GM12878 (cell line): ENCODE measurements at regions of chr10 and their contacts with region 1.

Region 1: DNA sequence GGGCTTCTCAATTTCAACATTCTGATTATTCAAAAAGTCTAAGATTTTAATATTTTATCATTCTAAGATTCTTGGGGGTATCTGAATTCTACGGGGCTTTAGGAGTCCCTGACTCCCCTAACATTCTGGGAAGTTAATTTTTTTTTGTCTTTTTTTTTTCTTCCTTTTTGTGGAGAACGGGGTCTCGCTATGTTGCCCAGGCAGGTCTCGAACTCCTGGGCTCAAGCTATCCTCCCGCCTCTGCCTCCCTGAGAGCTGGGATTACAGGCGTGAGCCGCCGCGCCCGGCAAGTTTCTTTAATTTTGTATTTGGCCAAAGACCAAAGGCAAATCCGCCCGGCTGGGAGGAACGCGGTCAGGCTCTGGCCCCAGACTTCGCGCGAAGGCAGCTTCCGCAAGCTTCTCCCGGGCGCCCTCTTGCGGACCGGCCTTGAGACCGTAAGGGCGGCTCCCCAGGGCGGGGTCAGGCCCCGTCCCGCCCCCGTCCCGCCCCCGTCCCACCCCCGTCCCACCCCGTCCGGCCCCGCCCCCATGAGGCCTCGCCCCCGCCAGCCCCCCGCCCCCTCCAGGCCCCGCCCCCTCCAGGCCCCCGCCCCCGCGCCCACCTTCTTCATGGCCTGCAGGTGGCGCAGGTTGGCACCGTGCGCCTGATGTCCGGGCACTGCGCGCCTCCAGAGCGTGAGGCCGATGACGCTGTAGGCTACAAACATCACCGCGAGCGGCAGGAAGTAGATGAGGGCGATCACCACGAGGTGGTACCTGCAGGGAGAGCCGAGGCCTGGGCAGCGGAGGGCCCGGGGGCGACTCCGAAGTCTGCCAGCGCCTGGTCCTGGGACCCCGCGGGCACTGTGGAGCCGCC is 8.2 kb downstream of the TACR2 start:
- DNase-seq: peak; percentile 62
- ATAC-seq: peak; percentile 91
- H3K4me3 ChIP-seq: peak overlapping the region; percentile 36; the same call in 1 of the 2 replicates
- H3K27ac ChIP-seq: no peak overlapping the region
- H3K4me1 ChIP-seq: peaks cover 16% of the 10 kb centered on the region
- H3K27me3 ChIP-seq: no peaks in the 10 kb centered on the region
- CTCF ChIP-seq: peak; percentile 27 to 68 (median 58); a peak in 5 of 6 replicates
- EP300 ChIP-seq: no peak
- POLR2A ChIP-seq: peak; percentile 78
- RAD21 ChIP-seq: peak; percentile 27

Region 2: DNA sequence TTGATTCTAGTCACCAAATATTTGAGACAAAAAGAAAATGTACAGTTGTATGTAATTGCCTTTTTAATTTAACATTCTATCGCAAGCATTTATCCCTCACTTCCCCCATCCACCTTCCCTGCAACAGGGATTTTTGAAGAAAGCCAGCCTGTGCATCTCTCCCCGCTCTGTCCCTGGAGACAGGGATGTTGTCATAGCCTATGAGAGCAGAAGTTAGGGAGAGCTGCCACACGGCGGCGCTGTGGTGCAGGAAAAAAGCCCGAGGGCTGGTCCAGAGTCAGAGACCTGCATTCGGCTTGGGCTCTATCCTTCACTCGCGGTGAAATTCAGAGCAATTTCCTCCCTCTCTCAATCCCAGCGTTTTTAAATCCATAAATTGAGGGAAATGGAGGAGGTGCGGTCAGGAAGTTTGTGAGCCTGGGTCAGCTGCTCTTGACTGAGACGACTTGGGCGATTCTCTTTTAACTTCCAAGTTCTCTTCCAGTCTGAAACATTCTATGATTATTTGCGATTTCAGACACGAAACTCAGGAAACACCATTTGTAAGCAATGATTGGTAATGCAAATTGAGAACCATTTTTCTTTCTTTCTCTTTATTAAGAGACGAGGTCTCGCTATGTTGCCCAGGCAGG is 170.9 kb before region 1 on chr10:
- CTCF ChIA-PET with region 1: interaction called, 25 read pairs
- POLR2A ChIA-PET with region 1: no interaction called
- RAD21 ChIA-PET with region 1: interaction called, 8 read pairs
- SMC1A ChIA-PET with region 1: interaction called, 6 read pairs
- in situ Hi-C with region 1: loop called (anchors 5 kb)
- intact Hi-C with region 1: no loop called
- DNase-seq: no peak
- ATAC-seq: peak; percentile 100
- H3K4me3 ChIP-seq: no peak overlapping the region
- H3K27ac ChIP-seq: no peak overlapping the region
- H3K4me1 ChIP-seq: no peaks in the 10 kb centered on the region
- H3K27me3 ChIP-seq: no peaks in the 10 kb centered on the region
- CTCF ChIP-seq: peak; percentile 85 to 98 (median 93)
- EP300 ChIP-seq: no peak
- POLR2A ChIP-seq: no peak
- RAD21 ChIP-seq: peak; percentile 94

Region 3: GRCh38 chr10:69392481-69393000 is 16.0 kb before region 1 on chr10:
- CTCF ChIA-PET with region 1: interaction called, 19 read pairs
- POLR2A ChIA-PET with region 1: no interaction called
- RAD21 ChIA-PET with region 1: interaction called, 4 read pairs
- SMC1A ChIA-PET with region 1: interaction called, 8 read pairs
- in situ Hi-C with region 1: no loop called
- intact Hi-C with region 1: no loop called
- DNase-seq: peak; percentile 51
- ATAC-seq: peak; percentile 100
- H3K4me3 ChIP-seq: no peak overlapping the region
- H3K27ac ChIP-seq: no peak overlapping the region
- H3K4me1 ChIP-seq: no peaks in the 10 kb centered on the region
- H3K27me3 ChIP-seq: no peaks in the 10 kb centered on the region
- CTCF ChIP-seq: peak; percentile 96 to 99 (median 98); a peak in 5 of 6 replicates
- EP300 ChIP-seq: no peak
- POLR2A ChIP-seq: no peak
- RAD21 ChIP-seq: peak; percentile 97

Region 4: GRCh38 chr10:69506834-69507721 is 98.5 kb after region 1 on chr10:
- CTCF ChIA-PET with region 1: interaction called, 32 read pairs
- POLR2A ChIA-PET with region 1: no interaction called
- RAD21 ChIA-PET with region 1: interaction called, 5 read pairs
- SMC1A ChIA-PET with region 1: interaction called, 19 read pairs
- in situ Hi-C with region 1: loop called (anchors 5 kb)
- intact Hi-C with region 1: loop called (anchors 1 kb)
- DNase-seq: no peak
- ATAC-seq: no peak
- H3K4me3 ChIP-seq: no peak overlapping the region
- H3K27ac ChIP-seq: no peak overlapping the region
- H3K4me1 ChIP-seq: no peaks in the 10 kb centered on the region
- H3K27me3 ChIP-seq: no peaks in the 10 kb centered on the region
- CTCF ChIP-seq: no peak
- EP300 ChIP-seq: no peak
- POLR2A ChIP-seq: no peak
- RAD21 ChIP-seq: no peak

Region 5: DNA sequence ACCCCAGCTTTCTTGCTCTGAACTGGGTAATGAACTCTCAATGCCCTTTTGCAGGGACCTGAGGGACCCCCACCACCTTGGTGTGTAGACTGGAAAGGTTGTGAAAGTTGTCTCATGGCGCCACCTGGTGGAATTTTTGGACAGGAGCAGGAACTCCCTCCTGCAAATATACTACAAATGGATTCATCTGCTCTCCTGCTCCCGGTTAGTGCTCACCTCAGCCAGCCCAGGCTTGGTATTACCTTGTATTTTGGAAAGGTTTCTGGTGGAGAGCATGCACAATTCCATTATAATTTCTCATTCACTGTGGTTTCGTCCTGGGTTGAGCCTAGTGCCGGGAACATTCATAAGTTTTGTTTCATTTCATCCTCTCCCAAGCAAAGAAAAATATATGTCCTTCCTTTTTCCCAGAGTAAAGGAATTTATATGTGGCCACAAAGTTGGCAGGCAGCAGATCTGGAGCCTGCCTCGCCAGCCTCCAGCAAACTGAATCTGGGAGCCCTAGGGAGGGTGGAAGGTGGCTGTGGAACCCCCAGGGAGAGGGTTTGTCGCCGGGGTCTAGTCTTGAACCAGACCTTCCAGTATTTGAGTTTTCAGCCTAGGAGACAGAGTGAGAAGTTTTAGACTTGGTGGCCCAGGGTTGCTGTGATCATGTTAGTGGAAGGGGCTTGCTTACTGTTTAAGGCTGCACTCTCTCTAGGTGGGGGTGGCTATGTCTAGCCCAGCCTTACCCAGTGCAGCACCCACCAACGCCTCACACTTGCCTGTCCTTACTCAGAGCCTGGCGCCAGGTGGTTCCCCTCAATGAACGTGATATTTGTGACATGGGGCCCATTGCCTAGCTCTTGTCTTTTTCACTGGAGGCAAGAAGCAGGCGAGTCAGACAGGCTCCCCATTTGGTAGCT is 231.0 kb after region 1 on chr10:
- CTCF ChIA-PET with region 1: interaction called, 9 read pairs
- POLR2A ChIA-PET with region 1: no interaction called
- RAD21 ChIA-PET with region 1: interaction called, 4 read pairs
- SMC1A ChIA-PET with region 1: interaction called, 3 read pairs
- in situ Hi-C with region 1: loop called (anchors 10 kb)
- intact Hi-C with region 1: loop called (anchors 5 kb)
- DNase-seq: peak; percentile 11
- ATAC-seq: peak; percentile 88
- H3K4me3 ChIP-seq: no peak overlapping the region
- H3K27ac ChIP-seq: no peak overlapping the region
- H3K4me1 ChIP-seq: no peaks in the 10 kb centered on the region
- H3K27me3 ChIP-seq: no peaks in the 10 kb centered on the region; a peak in 1 of 4 replicates
- CTCF ChIP-seq: peak; percentile 70 to 72 (median 72)
- EP300 ChIP-seq: no peak
- POLR2A ChIP-seq: no peak
- RAD21 ChIP-seq: peak; percentile 75